WTC11 (cell line): ENCODE measurements at regions of chr17 and their contacts with region 1.

Region 1: GRCh38 chr17:19470532-19471261 is 59.7 kb downstream of the RNF112 start:
- DNase-seq: peak; percentile 40
- ATAC-seq: peak; percentile 65
- H3K4me3 Mint-ChIP-seq: no peak overlapping the region
- H3K27ac Mint-ChIP-seq: peak overlapping the region; percentile 90
- H3K4me1 Mint-ChIP-seq: peaks cover 30% of the 10 kb centered on the region
- H3K27me3 Mint-ChIP-seq: no peaks in the 10 kb centered on the region
- CTCF ChIP-seq: no peak

Region 2: GRCh38 chr17:19482576-19482975 is 11.9 kb after region 1 on chr17:
- CTCF ChIA-PET with region 1: interaction called, 21 read pairs
- POLR2A ChIA-PET with region 1: interaction called, 4 read pairs
- DNase-seq: no peak
- ATAC-seq: peak; percentile 75
- H3K4me3 Mint-ChIP-seq: peak overlapping the region; percentile 48
- H3K27ac Mint-ChIP-seq: peak overlapping the region; percentile 98
- H3K4me1 Mint-ChIP-seq: peaks cover 39% of the 10 kb centered on the region
- H3K27me3 Mint-ChIP-seq: no peaks in the 10 kb centered on the region; the same call in 1 of the 2 replicates
- CTCF ChIP-seq: no peak